ENCODE measurements at regions of chr20 and their contacts with region 1.

Region 1: GRCh38 chr20:47196091-47197081 is 160.1 kb downstream of the ZMYND8 start:
- DNase-seq: peak; percentile 72 to 82
- H3K4me3 ChIP-seq: no peak overlapping the region
- H3K27ac ChIP-seq: no peak overlapping the region
- H3K4me1 ChIP-seq: 0 out of 2 replicates have a peak, but pooled peaks cover 10% of the 10 kb centered on the region
- H3K27me3 ChIP-seq: no peaks in the 10 kb centered on the region
- CTCF ChIP-seq: peak; percentile 99

Region 2: DNA sequence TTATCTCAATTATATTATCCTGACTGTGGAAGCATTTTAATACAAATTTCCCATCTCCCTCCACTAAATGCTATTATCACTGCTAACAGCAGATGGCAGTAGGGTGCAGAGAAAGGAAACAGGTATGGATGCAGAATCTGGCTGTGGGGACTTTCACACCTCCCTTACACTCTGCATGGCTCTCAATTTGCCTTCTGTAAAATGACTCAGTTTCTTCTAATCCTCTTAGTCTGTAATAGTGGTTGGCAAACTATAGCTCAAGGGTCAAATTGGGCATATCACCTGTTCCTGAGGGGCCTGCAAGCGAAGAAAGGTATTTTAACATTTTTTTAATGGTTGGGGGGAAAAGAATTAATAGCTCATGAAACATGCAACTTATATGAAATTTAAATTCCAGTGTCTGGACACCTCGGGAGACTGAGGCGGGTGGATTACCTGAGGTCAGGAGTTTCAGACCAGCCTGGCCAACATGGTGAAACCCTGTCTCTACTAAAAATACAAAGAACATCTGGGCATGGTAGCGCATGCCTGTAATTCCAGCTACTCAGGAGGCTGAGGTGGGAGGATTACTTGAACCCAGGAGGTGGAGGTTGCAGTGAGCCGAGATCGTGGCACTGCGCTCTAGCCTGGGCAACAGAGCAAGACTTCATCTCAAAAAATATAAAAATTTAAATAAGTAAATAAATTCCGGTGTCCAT is 76.7 kb after region 1 on chr20:
- CTCF ChIA-PET with region 1: no interaction called
- POLR2A ChIA-PET with region 1: no interaction called
- intact Hi-C with region 1: loop called (anchors 2 kb)
- DNase-seq: peak; percentile 53 to 58
- H3K4me3 ChIP-seq: no peak overlapping the region
- H3K27ac ChIP-seq: no peak overlapping the region
- H3K4me1 ChIP-seq: peaks cover 40% of the 10 kb centered on the region
- H3K27me3 ChIP-seq: no peaks in the 10 kb centered on the region
- CTCF ChIP-seq: peak; percentile 97

Region 3: DNA sequence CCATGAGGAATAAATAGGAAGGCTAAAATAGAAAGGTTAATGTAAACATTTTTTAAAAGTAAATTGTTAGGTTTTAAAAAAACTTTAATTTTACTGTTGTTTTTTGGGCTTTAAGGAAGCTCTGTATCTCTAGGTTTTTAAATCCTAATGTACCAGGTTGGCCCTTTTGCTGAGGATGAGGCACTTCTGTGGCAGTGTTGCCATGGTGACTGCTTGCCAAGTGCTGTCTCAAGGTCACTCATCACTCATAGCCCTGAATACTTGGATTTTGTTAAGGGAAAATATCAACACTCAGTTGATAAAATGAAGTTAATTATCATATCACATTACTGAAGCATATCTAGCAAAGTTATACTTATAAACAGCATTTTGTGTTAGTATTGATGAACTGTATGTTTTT is 355.5 kb after region 1 on chr20:
- CTCF ChIA-PET with region 1: interaction called, 10 read pairs
- POLR2A ChIA-PET with region 1: no interaction called
- intact Hi-C with region 1: no loop called
- DNase-seq: no peak
- H3K4me3 ChIP-seq: no peak overlapping the region
- H3K27ac ChIP-seq: 0 out of 2 replicates have a peak overlapping the region, but pooled peaks have one; percentile 2
- H3K4me1 ChIP-seq: 0 out of 2 replicates have a peak, but pooled peaks cover 2% of the 10 kb centered on the region
- H3K27me3 ChIP-seq: no peaks in the 10 kb centered on the region
- CTCF ChIP-seq: no peak

Measured in PC-9 (cell line).